ENCODE measurements at regions of chr11 and their contacts with region 1.

Region 1: DNA sequence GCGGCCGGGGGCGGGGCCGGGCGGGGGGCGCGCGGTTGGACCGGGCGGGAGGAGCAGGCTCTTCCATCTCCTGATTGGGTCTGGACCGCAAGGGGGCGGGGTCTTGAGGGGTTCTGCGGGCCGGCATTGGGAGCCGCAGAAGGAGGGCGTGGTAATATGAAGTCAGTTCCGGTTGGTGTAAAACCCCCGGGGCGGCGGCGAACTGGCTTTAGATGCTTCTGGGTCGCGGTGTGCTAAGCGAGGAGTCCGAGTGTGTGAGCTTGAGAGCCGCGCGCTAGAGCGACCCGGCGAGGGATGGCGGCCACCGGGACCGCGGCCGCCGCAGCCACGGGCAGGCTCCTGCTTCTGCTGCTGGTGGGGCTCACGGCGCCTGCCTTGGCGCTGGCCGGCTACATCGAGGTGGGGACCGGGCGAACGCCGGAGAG is at the start of gene APLP2:
- DNase-seq: peak; percentile 95 to 99 (median 96)
- ATAC-seq: peak; percentile 82
- H3K4me3 ChIP-seq: peak within 1 kb of the TSS; percentile 78
- H3K27ac ChIP-seq: peak within 1 kb of the TSS; percentile 90
- H3K4me1 ChIP-seq: peaks cover 11 to 21% of the 10 kb centered on the region in 2 experiments; a peak in 4 of 5 replicates
- H3K27me3 ChIP-seq: no peaks in the 10 kb centered on the region
- CTCF ChIP-seq: no peak
- EP300 ChIP-seq: no peak
- POLR2A ChIP-seq: peak; percentile 96
- RAD21 ChIP-seq: no peak; a peak in 1 of 4 replicates
- polyA plus RNA-seq, gene APLP2: 17.4 to 20.3 TPM

Region 2: GRCh38 chr11:129861702-129862113 is 208.0 kb before region 1 on chr11:
- CTCF ChIA-PET with region 1: no interaction called
- POLR2A ChIA-PET with region 1: no interaction called
- in situ Hi-C with region 1: no loop called
- intact Hi-C with region 1: no loop called
- DNase-seq: no peak
- ATAC-seq: no peak
- H3K4me3 ChIP-seq: no peak overlapping the region
- H3K27ac ChIP-seq: no peak overlapping the region
- H3K4me1 ChIP-seq: peaks cover 2 to 7% of the 10 kb centered on the region in 2 experiments; a peak in 4 of 5 replicates
- H3K27me3 ChIP-seq: no peaks in the 10 kb centered on the region
- CTCF ChIP-seq: no peak
- EP300 ChIP-seq: no peak
- POLR2A ChIP-seq: no peak
- RAD21 ChIP-seq: no peak

Region 3: DNA sequence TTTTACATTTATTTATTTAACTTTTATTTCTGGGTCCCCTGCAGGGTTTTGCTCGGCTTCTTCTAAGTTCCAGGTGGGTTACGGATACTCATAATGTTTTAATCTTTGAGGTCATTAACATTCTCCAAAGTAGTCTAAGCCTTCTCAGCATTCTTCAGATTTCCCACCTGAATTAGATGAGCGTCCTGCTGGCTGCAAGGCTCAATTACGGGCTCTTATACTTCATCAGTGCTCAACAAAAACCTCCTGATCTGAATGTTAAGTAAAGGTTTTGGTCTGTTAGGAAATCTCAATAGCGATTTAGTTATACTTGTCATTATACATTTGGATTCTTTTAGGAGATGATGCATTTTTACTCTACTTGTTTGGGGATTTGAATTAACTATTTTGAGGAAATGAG is 147.0 kb before region 1 on chr11:
- CTCF ChIA-PET with region 1: no interaction called
- POLR2A ChIA-PET with region 1: interaction called, 6 read pairs
- in situ Hi-C with region 1: no loop called
- intact Hi-C with region 1: loop called (anchors 2 kb)
- DNase-seq: no peak
- ATAC-seq: peak; percentile 44; the same call in 2 of the 3 replicates
- H3K4me3 ChIP-seq: no peak overlapping the region
- H3K27ac ChIP-seq: no peak overlapping the region
- H3K4me1 ChIP-seq: no peaks in the 10 kb centered on the region
- H3K27me3 ChIP-seq: no peaks in the 10 kb centered on the region
- CTCF ChIP-seq: no peak
- EP300 ChIP-seq: no peak
- POLR2A ChIP-seq: no peak
- RAD21 ChIP-seq: no peak

Region 4: GRCh38 chr11:130055617-130056016 is 14.1 kb before region 1 on chr11:
- CTCF ChIA-PET with region 1: no interaction called
- POLR2A ChIA-PET with region 1: interaction called, 14 read pairs
- in situ Hi-C with region 1: no loop called
- intact Hi-C with region 1: no loop called
- DNase-seq: no peak
- ATAC-seq: peak; percentile 38; the same call in 1 of the 3 replicates
- H3K4me3 ChIP-seq: no peak overlapping the region
- H3K27ac ChIP-seq: no peak overlapping the region
- H3K4me1 ChIP-seq: no peaks in the 10 kb centered on the region
- H3K27me3 ChIP-seq: peaks cover 18 to 22% of the 10 kb centered on the region in 2 experiments
- CTCF ChIP-seq: no peak
- EP300 ChIP-seq: no peak
- POLR2A ChIP-seq: no peak
- RAD21 ChIP-seq: no peak

Region 5: GRCh38 chr11:130087294-130087926 is 17.7 kb after region 1 on chr11:
- CTCF ChIA-PET with region 1: no interaction called
- POLR2A ChIA-PET with region 1: interaction called, 19 read pairs
- in situ Hi-C with region 1: no loop called
- intact Hi-C with region 1: no loop called
- DNase-seq: no peak
- ATAC-seq: peak; percentile 43; the same call in 2 of the 3 replicates
- H3K4me3 ChIP-seq: no peak overlapping the region
- H3K27ac ChIP-seq: no peak overlapping the region
- H3K4me1 ChIP-seq: peaks cover 0 to 31% of the 10 kb centered on the region in 2 experiments; a peak in 3 of 5 replicates
- H3K27me3 ChIP-seq: no peaks in the 10 kb centered on the region
- CTCF ChIP-seq: no peak
- EP300 ChIP-seq: no peak
- POLR2A ChIP-seq: no peak
- RAD21 ChIP-seq: no peak